Calu3 (cell line): ENCODE measurements at regions of chr1 and their contacts with region 1.

Region 1: GRCh38 chr1:110390692-110391245 is at the start of gene SLC16A4:
- DNase-seq: no peak
- H3K4me3 Mint-ChIP-seq: no peak within 1 kb of the TSS
- H3K27ac Mint-ChIP-seq: no peak within 1 kb of the TSS
- H3K4me1 Mint-ChIP-seq: peaks cover 20% of the 10 kb centered on the region
- H3K27me3 Mint-ChIP-seq: no peaks in the 10 kb centered on the region
- CTCF ChIP-seq: no peak
- total RNA-seq, gene SLC16A4: 0.83 and 1.2 TPM in 2 replicates

Region 2: DNA sequence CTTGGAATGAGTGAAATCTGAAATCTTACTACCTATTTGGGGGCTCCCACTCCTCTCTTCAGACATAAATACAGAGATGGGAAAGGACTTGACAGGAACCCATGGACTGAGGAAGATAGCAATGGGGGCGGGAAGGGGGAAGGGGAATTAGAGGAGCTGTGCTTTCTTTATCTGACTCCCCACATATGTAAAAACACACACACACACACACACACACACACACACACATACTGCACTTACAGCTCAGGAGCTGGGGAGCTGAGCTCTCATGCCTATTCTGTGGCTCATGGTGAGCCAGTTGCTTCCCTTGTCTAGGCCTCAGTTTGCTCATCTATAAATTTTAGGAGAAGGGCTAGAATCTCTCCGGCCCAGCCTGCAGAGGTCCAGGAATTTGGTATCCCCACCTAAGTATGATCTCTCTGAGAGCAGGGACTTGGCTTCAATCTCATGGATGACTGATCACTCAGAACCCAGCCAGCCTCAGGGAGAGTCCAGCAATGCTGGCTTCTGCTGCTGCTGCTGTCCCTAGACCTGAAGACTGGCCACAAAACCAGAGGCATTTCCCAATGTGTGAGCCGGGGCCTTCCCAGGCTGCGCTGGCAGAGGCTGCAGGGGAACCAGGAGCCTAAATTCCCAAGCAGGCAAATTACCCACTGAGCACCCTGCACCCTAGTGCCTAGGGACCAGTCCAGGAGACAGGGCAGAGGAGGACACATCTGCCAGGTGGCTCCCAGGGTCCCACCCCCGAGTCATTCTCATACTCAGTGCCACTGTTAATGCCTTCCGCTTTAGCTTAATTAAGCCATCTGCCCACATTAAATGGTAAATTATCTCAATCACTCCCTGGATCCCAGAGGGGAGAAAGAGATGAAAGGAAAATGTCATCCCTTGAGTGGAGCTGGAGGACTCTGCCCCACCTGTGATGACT is 109.1 kb before region 1 on chr1:
- CTCF ChIA-PET with region 1: no interaction called
- intact Hi-C with region 1: no loop called
- DNase-seq: no peak
- H3K4me3 Mint-ChIP-seq: no peak overlapping the region
- H3K27ac Mint-ChIP-seq: no peak overlapping the region
- H3K4me1 Mint-ChIP-seq: no peaks in the 10 kb centered on the region
- H3K27me3 Mint-ChIP-seq: no peaks in the 10 kb centered on the region
- CTCF ChIP-seq: no peak

Region 3: GRCh38 chr1:110338886-110339406 is 51.8 kb before region 1 on chr1 and contains the start of gene RBM15:
- CTCF ChIA-PET with region 1: no interaction called
- intact Hi-C with region 1: loop called (anchors 5 kb)
- DNase-seq: peak; percentile 93
- H3K4me3 Mint-ChIP-seq: no peak within 1 kb of the TSS
- H3K27ac Mint-ChIP-seq: no peak within 1 kb of the TSS
- H3K4me1 Mint-ChIP-seq: peaks cover 33% of the 10 kb centered on the region
- H3K27me3 Mint-ChIP-seq: no peaks in the 10 kb centered on the region
- CTCF ChIP-seq: no peak
- total RNA-seq, gene RBM15: 35.6 and 36.7 TPM in 2 replicates

Region 4: GRCh38 chr1:110407260-110408210 is 16.8 kb after region 1 on chr1 and contains the start of gene LAMTOR5:
- CTCF ChIA-PET with region 1: no interaction called
- intact Hi-C with region 1: no loop called
- DNase-seq: peak; percentile 87
- H3K4me3 Mint-ChIP-seq: peak within 1 kb of the TSS; percentile 99
- H3K27ac Mint-ChIP-seq: peak within 1 kb of the TSS; percentile 94
- H3K4me1 Mint-ChIP-seq: peaks cover 11% of the 10 kb centered on the region
- H3K27me3 Mint-ChIP-seq: no peaks in the 10 kb centered on the region
- CTCF ChIP-seq: no peak
- total RNA-seq, gene LAMTOR5: 85.6 and 87.4 TPM in 2 replicates

Region 5: GRCh38 chr1:110433803-110434202 is 43.0 kb after region 1 on chr1:
- CTCF ChIA-PET with region 1: no interaction called
- intact Hi-C with region 1: no loop called
- DNase-seq: peak; percentile 69
- H3K4me3 Mint-ChIP-seq: no peak overlapping the region
- H3K27ac Mint-ChIP-seq: no peak overlapping the region
- H3K4me1 Mint-ChIP-seq: no peaks in the 10 kb centered on the region
- H3K27me3 Mint-ChIP-seq: peaks cover 31% of the 10 kb centered on the region
- CTCF ChIP-seq: no peak